Dorsolateral prefrontal cortex (tissue), 120 donors: ENCODE measurements at regions of chr10 and their contacts with region 1.

Region 1: GRCh38 chr10:43105102-43105785 is 28.4 kb downstream of the RET start:
- DNase-seq: peak; percentile 45 to 86 (median 70)
- H3K4me3 ChIP-seq: peak overlapping the region; percentile 45 to 84 (median 66)
- H3K27ac ChIP-seq: peak overlapping the region in 10 of 59 donors; percentile 0 to 59 (median 17)
- H3K27me3 ChIP-seq: peaks cover 0 to 7% (median 0%) of the 10 kb centered on the region in 45 donors
- CTCF ChIP-seq: peak; percentile 74 to 100 (median 99)

Region 2: GRCh38 chr10:42753126-42753506 is 352.1 kb before region 1 on chr10:
- intact Hi-C with region 1: loop called (anchors 2 to 10 kb)
- DNase-seq: peak in 9 of 10 donors; percentile 15 to 77 (median 47)
- H3K4me3 ChIP-seq: peak overlapping the region; percentile 23 to 76 (median 52)
- H3K27ac ChIP-seq: no peak overlapping the region
- H3K27me3 ChIP-seq: peaks cover 3 to 98% (median 61%) of the 10 kb centered on the region in 45 donors
- CTCF ChIP-seq: peak; percentile 41 to 87 (median 76)

Region 3: DNA sequence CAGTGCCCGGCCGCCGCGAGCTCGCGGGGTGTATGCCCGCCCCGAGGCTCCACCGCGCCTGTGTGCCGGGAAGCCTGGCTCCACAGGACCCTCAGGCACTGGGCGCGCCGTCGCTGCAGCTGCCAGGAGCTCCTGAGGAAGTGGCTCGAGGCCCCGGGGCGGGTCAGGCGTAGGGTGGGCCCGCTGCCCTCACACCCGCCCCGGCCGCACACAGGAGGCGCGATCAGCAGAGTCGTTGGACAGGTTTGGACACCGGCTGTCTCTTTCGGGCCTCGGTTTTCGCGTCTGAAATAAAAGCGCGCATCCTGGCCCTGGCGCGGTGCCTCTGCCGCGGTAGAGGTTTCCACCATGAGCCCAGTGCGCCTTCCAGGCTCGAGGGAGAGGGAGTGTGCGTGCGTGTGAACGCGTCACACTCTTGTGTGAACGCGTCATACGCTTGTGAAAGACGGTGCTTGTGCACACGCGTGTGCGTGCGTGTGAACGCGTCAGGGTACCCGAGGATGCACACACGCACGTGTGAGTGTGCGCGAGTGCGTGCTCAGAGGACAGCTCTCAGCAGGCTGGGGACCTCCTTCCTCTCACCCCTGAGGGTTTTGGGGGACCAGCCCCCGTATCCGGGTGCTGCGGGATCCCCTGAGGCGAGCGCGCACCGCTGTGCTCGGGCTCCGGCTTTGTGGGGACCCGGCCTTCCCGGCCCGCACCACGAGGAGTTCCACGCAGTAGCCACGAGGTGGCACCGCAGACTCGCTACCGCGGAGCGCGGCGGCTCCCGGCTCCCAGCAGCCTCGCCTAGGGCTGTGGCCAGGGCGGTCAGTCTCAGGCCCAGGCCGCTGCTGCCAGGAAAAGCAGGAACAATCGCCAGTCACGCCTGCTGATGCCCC is 238.9 kb before region 1 on chr10:
- intact Hi-C with region 1: loop called (anchors 1 kb)
- DNase-seq: peak; percentile 62 to 92 (median 75)
- H3K4me3 ChIP-seq: peak overlapping the region in 58 of 59 donors; percentile 13 to 66 (median 43)
- H3K27ac ChIP-seq: peak overlapping the region in 3 of 59 donors; percentile 9 to 49 (median 31)
- H3K27me3 ChIP-seq: peaks cover 0 to 17% (median 0%) of the 10 kb centered on the region in 45 donors
- CTCF ChIP-seq: peak; percentile 36 to 91 (median 77)

Region 4: GRCh38 chr10:43781480-43782361 is 676.5 kb after region 1 on chr10:
- intact Hi-C with region 1: no loop called
- DNase-seq: no peak
- H3K4me3 ChIP-seq: no peak overlapping the region
- H3K27ac ChIP-seq: no peak overlapping the region
- H3K27me3 ChIP-seq: peaks cover 0 to 9% (median 0%) of the 10 kb centered on the region in 45 donors
- CTCF ChIP-seq: no peak